ENCODE measurements at regions of chr9 and their contacts with region 1.

Region 1: DNA sequence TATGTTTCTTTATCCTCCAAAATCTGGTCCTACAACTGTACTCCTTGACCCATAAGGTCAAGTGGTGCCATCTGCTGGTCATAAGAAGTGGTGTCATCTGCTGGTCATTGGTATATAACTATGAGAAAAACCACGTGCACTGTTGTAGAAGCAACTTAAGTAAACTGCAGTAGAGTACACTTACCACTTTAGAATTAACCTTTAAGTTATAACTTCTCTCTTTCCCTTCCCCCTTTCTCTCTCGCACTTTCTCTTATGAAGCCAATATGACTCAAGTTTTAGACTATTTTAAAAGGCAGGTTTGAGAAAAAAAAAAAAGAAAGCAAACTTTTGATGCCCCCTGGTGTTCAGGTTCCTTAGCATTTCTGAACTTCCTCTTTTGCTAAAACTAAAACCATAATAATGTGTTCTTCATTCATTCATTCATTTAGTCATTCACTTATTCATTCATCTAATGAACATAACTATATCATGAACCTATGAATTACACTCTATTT is 12.8 kb upstream of the MTAP start:
- DNase-seq: peak; percentile 41 to 81 (median 54)
- H3K4me3 ChIP-seq: no peak overlapping the region
- H3K27ac ChIP-seq: no peak overlapping the region
- H3K4me1 ChIP-seq: no peaks in the 10 kb centered on the region
- H3K27me3 ChIP-seq: peaks cover 7% of the 10 kb centered on the region
- CTCF ChIP-seq: peak; percentile 56 to 88 (median 78)
- POLR2A ChIP-seq: no peak

Region 2: GRCh38 chr9:21326526-21327139 is 463.0 kb before region 1 on chr9:
- intact Hi-C with region 1: loop called in 1 of 2 experiments (anchors 10 kb)
- DNase-seq: no peak
- H3K4me3 ChIP-seq: no peak overlapping the region
- H3K27ac ChIP-seq: no peak overlapping the region
- H3K4me1 ChIP-seq: peaks cover 9 to 25% of the 10 kb centered on the region in 2 donors
- H3K27me3 ChIP-seq: no peaks in the 10 kb centered on the region
- CTCF ChIP-seq: peak; percentile 49 to 74 (median 60)
- POLR2A ChIP-seq: no peak

Region 3: DNA sequence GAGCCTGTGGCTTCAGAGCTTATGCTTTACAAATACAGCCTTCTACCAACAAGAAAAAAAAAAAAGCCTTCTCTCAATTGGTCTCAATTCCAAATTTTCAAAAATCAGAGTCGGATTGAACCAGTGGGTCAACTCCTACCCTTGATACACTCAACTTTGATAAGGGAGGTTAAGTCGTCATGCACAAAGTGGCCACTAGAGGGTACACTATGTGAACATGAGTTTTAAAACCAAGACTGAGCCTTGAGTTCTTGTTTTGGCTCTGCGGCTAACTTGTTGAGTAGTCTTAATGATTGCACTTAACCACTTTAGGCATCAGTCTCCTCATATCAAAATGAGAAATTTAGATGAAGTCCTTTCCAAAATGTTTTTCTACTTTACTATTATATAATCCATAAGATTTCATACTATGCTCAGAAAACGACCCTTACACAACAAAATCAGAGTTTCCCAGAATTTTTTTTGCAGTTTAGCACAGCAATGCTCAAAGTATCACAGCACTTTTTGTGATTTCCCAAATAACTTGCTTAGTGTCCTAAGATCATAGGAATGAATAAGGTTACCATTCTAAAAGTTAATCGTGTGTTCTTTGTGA is 80.0 kb before region 1 on chr9:
- intact Hi-C with region 1: loop called in 1 of 2 experiments (anchors 10 kb)
- DNase-seq: peak; percentile 29 to 80 (median 59)
- H3K4me3 ChIP-seq: no peak overlapping the region
- H3K27ac ChIP-seq: no peak overlapping the region
- H3K4me1 ChIP-seq: no peaks in the 10 kb centered on the region
- H3K27me3 ChIP-seq: peaks cover 14% of the 10 kb centered on the region
- CTCF ChIP-seq: peak; percentile 43 to 84 (median 66)
- POLR2A ChIP-seq: no peak

Measured in adrenal gland (tissue), 19 donors.